Activated CD4-positive, alpha-beta memory T cell treated with anti-CD3 and anti-CD28 coated beads, Interleukin-2, amount 10 ng/mL, durations not matched to agents 7 days and 5 days (primary cell): ENCODE measurements at regions of chr14 and their contacts with region 1.

Region 1: DNA sequence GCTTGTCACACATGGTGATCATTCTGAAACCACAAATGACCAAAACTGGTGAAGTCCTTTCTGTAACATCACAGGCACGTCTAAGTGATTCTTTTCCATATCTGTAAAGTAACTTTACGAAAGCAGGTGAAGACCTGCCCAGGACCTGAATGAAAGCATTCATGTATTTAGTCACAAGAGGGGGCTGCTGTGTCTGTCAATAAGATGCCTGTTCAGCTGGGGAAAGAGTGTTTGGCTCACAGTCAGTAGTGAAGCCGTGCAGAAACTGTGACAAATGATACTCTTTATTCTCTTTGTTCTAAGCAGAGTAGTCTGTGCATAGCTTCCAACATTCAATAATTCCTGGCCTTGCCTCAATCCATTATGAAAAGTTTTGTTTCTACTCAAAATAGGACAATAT is 373.5 kb upstream of the OR4E1 start:
- DNase-seq: peak; percentile 38
- H3K4me3 Mint-ChIP-seq: peak overlapping the region; percentile 27
- H3K27ac Mint-ChIP-seq: peak overlapping the region; percentile 76
- H3K4me1 Mint-ChIP-seq: peaks cover 42% of the 10 kb centered on the region
- H3K27me3 Mint-ChIP-seq: peaks cover 1% of the 10 kb centered on the region

Region 2: DNA sequence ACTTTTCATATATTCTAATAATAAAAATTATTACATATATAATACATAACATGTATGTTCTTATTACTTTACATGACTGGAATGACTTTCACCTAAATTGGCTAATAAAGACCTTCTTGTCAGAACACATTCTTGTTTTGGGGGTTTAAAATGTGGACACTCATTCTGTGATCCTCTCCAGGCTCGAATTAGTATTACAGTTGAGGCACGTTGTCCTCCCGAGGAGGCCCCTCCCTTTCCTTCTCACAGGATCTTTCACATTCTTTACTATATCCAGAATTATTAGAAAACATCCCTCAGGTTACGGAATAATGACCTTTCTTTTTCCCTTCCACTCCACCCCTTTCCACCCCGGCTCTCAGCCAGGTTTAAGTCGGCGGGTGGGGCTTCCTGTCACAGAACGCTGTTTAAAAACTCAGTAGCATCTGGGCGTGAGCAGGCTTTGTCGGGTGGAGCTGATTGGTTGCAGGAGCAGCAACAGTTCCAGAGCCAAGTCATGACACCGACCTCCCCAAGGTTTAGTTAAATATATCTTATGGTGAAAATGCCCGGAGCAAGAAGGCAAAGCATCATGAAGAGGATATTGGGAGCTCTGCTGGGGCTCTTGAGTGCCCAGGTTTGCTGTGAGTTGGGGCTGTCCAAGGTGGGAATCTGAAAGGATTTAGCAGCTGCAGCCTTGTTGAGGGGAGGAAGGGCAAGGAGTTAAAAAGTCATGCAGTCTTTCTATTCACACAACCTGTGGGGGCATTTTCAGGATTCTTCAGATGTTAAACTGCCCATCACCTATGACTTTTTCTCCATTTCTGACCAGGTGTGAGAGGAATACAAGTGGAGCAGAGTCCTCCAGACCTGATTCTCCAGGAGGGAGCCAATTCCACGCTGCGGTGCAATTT is 23.2 kb after region 1 on chr14:
- CTCF ChIA-PET with region 1: interaction called, 6 read pairs
- POLR2A ChIA-PET with region 1: interaction called, 11 read pairs
- DNase-seq: peak; percentile 70
- H3K4me3 Mint-ChIP-seq: peak overlapping the region; percentile 91
- H3K27ac Mint-ChIP-seq: peak overlapping the region; percentile 95
- H3K4me1 Mint-ChIP-seq: peaks cover 38% of the 10 kb centered on the region
- H3K27me3 Mint-ChIP-seq: no peaks in the 10 kb centered on the region